Heart right ventricle (tissue), 16 donors: ENCODE measurements at regions of chr7 and their contacts with region 1.

Region 1: DNA sequence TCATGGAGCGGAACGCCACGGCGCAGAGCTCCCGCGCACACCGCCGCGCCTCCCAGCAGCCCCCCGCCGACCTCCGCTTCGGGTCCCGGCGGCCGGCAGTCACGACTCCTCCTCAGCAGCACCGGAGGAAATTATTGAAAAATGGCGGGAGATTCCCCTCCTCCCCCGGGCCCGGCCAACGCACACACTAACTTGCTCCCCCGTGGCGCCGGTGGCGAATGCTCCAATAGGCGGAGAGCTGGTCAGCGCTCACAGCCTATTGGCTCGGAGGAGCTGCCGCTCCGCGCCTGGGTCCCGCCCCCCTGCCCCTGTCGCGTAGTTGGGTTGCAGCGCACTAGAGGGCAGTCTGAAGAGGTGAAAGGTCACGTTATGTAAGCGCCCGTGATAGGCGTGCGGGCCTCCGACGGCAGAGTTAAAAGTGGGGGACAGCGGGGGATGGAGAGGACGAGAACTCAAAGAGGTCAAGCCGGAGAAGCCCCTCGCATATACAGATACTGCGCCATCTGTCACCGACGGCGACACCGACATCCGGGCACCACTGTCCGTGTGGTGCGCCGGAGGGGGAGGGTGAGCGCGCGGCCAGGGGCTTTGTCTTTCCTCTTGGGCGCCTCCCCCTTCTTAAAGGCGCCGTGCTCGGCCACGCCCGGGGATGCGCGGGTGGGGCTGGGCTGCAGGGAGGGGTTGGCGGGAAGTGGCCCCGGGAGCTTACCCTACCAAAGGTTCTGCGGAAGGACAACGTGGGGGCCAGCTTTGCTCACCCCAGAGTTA is at the start of gene BAZ1B:
- DNase-seq: peak; percentile 97 to 98
- ATAC-seq: peak; percentile 97 to 99 (median 98)
- H3K4me3 ChIP-seq: peak within 1 kb of the TSS; percentile 76 to 97 (median 88)
- H3K27ac ChIP-seq: peak within 1 kb of the TSS; percentile 82 to 98 (median 95)
- H3K4me1 ChIP-seq: peaks cover 5 to 69% (median 43%) of the 10 kb centered on the region in 9 donors
- H3K27me3 ChIP-seq: no peaks in the 10 kb centered on the region
- CTCF ChIP-seq: peak in 7 of 9 donors; percentile 15 to 51 (median 22)
- total RNA-seq, gene BAZ1B: 34.0 to 49.9 (median 41.5) TPM

Region 2: DNA sequence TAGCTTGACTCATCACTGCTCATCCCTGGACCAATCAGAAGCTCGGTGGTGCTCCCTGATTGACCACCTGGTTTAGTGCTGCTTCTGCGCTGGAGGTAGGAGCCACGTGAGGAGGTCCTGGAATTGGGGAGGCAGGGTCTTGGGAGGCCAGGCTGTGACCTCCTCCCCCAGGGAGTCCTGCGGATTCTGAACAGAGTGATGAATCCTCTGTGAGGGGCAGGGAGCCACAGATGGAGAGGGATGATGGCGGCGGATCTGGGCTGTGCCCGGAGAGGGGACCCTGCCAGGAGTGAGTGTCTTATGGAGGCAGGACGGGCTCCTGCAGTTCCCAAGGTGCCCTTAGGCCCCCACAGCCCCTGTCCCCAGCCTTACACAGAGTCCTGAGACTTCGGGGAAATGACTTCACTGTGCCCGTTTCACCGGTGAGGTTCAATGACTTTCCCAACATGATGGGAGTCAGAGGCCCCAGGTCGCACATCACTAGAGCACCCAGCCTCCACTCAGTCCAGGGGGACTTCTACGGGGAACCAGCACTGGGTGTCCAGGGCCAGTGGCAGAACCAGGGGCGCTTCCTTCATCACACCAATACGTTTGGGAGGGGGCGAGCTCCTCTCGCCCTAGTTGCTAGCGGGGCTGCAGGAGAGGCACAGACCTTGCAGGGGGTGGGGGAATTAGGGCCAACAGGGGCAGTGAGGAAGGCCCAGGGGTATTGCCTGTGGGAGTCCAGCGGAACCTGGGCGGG is 145.4 kb before region 1 on chr7:
- intact Hi-C with region 1: no loop called
- DNase-seq: no peak
- ATAC-seq: no peak
- H3K4me3 ChIP-seq: no peak overlapping the region
- H3K27ac ChIP-seq: no peak overlapping the region
- H3K4me1 ChIP-seq: no peaks in the 10 kb centered on the region
- H3K27me3 ChIP-seq: peaks cover 7 to 43% (median 33%) of the 10 kb centered on the region in 7 donors
- CTCF ChIP-seq: no peak

Region 3: DNA sequence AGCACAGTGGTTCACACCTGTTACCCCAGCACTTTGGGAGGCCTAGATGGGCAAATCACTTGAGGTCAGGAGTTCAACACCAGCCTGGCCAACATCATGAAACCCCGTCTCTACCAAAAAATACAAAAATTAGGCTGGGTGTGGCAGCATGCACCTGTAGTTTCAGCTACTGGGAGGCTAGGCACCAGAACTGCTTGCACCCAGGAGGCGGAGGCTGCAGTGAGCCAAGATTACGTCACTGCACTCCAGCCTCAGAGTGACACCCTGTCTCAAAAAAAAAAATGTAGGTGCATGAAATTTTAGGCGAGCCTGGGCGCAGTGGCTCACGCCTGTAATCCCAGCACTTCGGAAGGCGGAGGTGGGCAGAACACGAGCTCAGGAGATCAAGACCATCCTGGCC is 25.6 kb after region 1 on chr7:
- intact Hi-C with region 1: loop called in 1 of 10 experiments (anchors 2 kb)
- DNase-seq: no peak
- ATAC-seq: peak in 2 of 8 donors; percentile 24 to 52
- H3K4me3 ChIP-seq: no peak overlapping the region
- H3K27ac ChIP-seq: peak overlapping the region in 2 of 10 donors; percentile 22 to 69
- H3K4me1 ChIP-seq: peaks cover 0 to 36% (median 19%) of the 10 kb centered on the region in 9 donors
- H3K27me3 ChIP-seq: no peaks in the 10 kb centered on the region
- CTCF ChIP-seq: no peak

Region 4: GRCh38 chr7:73557108-73557396 is 34.8 kb after region 1 on chr7:
- intact Hi-C with region 1: loop called in 7 of 10 experiments (anchors 1 to 5 kb)
- DNase-seq: peak; percentile 93 to 95
- ATAC-seq: peak; percentile 96 to 98 (median 97)
- H3K4me3 ChIP-seq: peak overlapping the region; percentile 52 to 86 (median 76)
- H3K27ac ChIP-seq: peak overlapping the region; percentile 96 to 100 (median 99)
- H3K4me1 ChIP-seq: peaks cover 3 to 39% (median 30%) of the 10 kb centered on the region in 9 donors
- H3K27me3 ChIP-seq: no peaks in the 10 kb centered on the region
- CTCF ChIP-seq: no peak

Region 5: DNA sequence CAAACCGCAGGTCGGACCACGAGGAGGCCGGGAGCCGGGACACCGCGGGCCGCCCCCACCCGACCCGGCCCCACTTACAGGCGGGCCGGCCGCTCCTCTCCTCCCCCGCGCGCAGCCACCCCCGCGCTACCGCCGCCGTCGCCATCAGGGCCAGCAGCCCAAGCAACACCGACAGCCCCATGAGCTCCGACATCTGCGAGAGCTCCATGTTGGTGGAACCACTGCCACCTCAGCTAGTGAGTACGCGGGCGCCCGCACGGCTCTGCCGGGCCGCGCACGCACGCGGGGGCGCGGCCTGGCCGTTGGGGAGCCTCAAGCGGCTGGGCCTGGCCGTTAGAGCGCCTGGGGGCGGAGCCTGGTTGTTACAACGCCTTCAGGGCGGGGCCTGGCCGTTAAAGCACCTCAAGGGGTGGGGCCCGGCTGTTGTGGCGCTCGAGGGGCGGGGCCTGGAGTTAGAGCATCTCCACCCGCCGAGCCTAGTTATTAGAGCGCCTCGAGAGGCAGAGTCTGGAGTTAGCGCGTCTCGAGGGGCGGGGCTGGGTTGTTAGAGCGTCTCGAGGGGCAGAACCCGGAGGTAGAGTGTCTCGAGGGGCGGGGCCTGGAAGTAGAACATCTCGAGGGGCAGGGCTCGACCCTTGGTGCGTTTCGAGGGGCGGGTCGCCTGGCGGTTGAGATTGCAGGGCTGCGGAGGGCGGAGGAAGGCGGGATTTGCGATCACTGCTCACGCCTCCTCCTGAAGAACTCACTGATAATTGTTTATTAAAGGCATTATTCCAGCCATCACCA is 56.2 kb after region 1 on chr7 and contains the start of gene TBL2:
- intact Hi-C with region 1: loop called in 2 of 10 experiments (anchors 2 kb)
- DNase-seq: peak; percentile 98 to 99
- ATAC-seq: peak; percentile 96 to 98 (median 98)
- H3K4me3 ChIP-seq: peak within 1 kb of the TSS; percentile 66 to 99 (median 88)
- H3K27ac ChIP-seq: peak within 1 kb of the TSS; percentile 58 to 95 (median 87)
- H3K4me1 ChIP-seq: peaks cover 6 to 52% (median 21%) of the 10 kb centered on the region in 9 donors
- H3K27me3 ChIP-seq: no peaks in the 10 kb centered on the region
- CTCF ChIP-seq: peak in 5 of 9 donors; percentile 9 to 50 (median 45)
- total RNA-seq, gene TBL2: 7.7 to 20.6 (median 10.4) TPM

Region 6: GRCh38 chr7:74417419-74417971 is 895.2 kb after region 1 on chr7:
- intact Hi-C with region 1: no loop called
- DNase-seq: peak; percentile 64 to 69
- ATAC-seq: peak; percentile 84 to 94 (median 92)
- H3K4me3 ChIP-seq: no peak overlapping the region
- H3K27ac ChIP-seq: no peak overlapping the region
- H3K4me1 ChIP-seq: peaks cover 0 to 7% (median 0%) of the 10 kb centered on the region in 9 donors
- H3K27me3 ChIP-seq: peaks cover 0 to 5% (median 0%) of the 10 kb centered on the region in 7 donors
- CTCF ChIP-seq: peak; percentile 92 to 98 (median 96)